Activated B cell treated with CpG ODN at 0.5 μM for 24 hours (primary cell): ENCODE measurements at regions of chr7 and their contacts with region 1.

Region 1: GRCh38 chr7:116165717-116166116 is 44.6 kb upstream of the TES start:
- DNase-seq: no peak
- ATAC-seq: peak; percentile 85
- H3K4me3 Mint-ChIP-seq: peak overlapping the region; percentile 61
- H3K27ac Mint-ChIP-seq: peak overlapping the region; percentile 92
- H3K4me1 Mint-ChIP-seq: peaks cover 82% of the 10 kb centered on the region
- H3K27me3 Mint-ChIP-seq: no peaks in the 10 kb centered on the region
- CTCF ChIP-seq: no peak

Region 2: DNA sequence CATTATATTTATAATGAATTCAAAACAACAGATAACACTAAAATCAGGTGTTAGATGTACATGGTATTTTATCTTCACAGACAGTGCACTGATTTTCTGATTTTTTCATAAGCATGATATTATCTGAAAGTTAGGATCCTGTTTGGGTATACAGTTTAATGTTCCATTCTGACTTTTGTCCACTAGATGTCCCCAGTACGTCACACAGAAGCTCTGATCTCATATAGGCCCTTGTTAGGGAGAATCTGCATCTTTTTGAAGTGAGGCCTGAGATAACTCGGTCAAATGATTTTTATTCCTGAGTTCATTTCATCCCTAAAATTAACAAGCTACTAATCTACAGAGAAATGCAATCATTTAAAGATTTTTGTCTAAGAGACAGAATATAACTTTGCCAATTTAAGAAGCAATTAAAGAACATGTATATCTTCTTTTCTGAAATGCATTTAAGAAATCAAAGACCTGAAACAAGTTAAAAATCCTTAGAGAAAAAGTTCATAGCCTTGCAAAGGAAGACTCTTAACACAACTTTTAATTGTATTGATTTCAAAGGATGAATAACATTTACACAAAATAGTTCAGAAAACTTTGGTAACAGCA is 27.4 kb before region 1 on chr7:
- CTCF ChIA-PET with region 1: interaction called, 23 read pairs
- POLR2A ChIA-PET with region 1: no interaction called
- intact Hi-C with region 1: loop called (anchors 2 kb)
- DNase-seq: no peak
- ATAC-seq: peak; percentile 91
- H3K4me3 Mint-ChIP-seq: no peak overlapping the region
- H3K27ac Mint-ChIP-seq: no peak overlapping the region
- H3K4me1 Mint-ChIP-seq: peaks cover 33% of the 10 kb centered on the region
- H3K27me3 Mint-ChIP-seq: no peaks in the 10 kb centered on the region
- CTCF ChIP-seq: peak; percentile 48

Region 3: DNA sequence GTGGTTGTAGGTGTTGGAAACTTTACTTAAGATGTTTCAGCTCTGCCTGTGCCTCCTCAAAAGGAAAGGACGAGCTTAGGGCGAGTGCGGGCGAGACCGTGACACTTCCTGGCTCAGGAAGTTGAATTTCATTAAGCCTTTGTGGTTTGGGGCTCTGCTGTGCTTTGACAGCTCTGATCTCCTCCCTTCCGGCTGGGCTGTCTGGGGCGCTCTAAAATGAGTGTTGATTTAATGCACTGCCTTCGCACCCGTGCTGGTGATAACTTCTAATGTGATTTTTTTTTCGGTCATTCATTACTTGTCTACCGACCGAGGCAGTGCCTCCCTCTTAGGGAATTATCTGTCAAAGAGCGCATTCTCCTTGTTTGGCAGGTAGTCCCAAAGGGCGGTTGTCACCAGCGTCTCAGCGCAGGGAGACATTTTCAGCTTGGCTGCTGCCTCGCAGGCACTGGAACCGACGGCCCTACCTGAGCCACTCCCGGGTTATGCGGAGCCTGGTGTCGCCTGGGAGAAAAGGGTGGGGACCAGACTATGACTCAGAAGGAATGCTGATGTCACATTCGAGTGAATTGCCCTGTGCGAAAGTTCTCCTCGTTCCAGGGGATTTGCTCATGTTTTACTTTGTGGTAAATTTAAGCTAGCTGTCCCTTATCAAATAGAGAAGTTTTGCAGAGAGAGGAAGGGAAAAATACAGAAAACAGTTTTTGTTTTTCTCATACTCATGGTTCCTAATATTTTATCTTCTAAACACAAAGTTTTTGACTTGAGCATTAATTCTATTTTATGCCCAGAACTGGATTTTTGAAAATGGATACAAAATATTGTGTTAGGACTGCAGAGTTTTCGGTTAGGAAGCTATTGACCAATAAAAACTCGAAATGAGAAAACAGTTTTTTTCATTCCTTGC is 45.5 kb after region 1 on chr7:
- CTCF ChIA-PET with region 1: interaction called, 5 read pairs
- POLR2A ChIA-PET with region 1: interaction called, 12 read pairs
- intact Hi-C with region 1: loop called (anchors 2 kb)
- DNase-seq: peak; percentile 52
- ATAC-seq: peak; percentile 71
- H3K4me3 Mint-ChIP-seq: peak overlapping the region; percentile 98
- H3K27ac Mint-ChIP-seq: peak overlapping the region; percentile 96
- H3K4me1 Mint-ChIP-seq: peaks cover 52% of the 10 kb centered on the region
- H3K27me3 Mint-ChIP-seq: no peaks in the 10 kb centered on the region
- CTCF ChIP-seq: no peak

Region 4: DNA sequence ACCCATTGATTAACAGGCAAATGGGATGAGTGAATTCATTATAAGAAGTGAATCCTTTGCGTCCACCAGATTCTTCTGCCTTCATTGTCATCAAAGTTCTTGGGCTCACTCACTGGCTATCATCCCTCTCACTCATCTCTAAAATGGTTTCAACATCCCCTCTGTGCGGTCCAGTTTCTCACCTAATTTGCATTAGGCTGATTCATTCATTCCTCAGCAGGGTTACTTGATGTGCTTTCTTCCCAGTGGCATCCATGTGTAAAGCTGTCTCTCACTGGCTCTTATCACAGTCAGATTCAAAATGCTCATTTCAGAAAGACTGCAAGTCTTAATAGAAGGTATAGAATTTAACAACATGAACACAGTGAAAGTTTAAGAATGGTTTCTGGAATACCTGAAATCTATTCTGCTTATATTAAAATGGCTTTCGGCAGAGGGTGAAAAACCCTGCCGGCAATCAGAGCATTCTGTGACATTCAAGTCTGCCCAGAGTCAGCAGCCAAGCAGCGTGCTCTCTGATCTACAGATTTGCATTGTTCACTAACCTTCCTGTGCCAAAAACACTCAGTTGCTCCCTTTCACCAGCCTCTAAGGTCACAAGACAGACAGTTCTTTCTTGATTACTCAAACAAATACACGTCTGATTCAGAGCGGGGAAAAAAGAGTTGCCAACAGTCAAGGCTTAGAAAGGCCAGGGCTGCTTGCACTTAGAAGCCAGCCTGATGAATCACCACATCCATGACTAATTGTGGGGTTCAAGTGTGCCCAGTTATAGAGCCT is 151.3 kb after region 1 on chr7:
- CTCF ChIA-PET with region 1: no interaction called
- POLR2A ChIA-PET with region 1: no interaction called
- intact Hi-C with region 1: loop called (anchors 5 kb)
- DNase-seq: no peak
- ATAC-seq: peak; percentile 74
- H3K4me3 Mint-ChIP-seq: peak overlapping the region; percentile 42
- H3K27ac Mint-ChIP-seq: peak overlapping the region; percentile 80
- H3K4me1 Mint-ChIP-seq: peaks cover 24% of the 10 kb centered on the region
- H3K27me3 Mint-ChIP-seq: peaks cover 5% of the 10 kb centered on the region
- CTCF ChIP-seq: no peak

Region 5: DNA sequence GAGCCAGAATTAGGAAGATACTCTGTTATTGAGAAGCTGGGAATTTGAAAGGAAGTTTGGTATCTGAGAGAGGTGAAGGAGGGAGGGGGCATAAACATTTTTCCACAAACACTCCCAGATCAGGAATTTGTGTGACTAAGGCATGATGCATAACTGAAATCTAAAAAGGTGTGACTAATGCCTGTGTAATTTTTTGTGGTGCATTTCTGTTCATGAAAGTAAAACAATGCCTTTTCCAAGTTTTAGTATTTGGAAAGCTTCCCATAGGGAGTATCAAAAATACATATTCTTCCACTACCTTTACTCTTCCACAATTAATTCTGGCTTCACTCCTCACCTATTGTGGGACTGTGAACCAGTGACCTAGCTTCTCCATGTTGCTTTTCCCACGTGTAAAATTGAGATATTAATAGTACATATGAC is 277.4 kb after region 1 on chr7:
- CTCF ChIA-PET with region 1: no interaction called
- POLR2A ChIA-PET with region 1: no interaction called
- intact Hi-C with region 1: no loop called
- DNase-seq: no peak
- ATAC-seq: no peak
- H3K4me3 Mint-ChIP-seq: no peak overlapping the region
- H3K27ac Mint-ChIP-seq: no peak overlapping the region
- H3K4me1 Mint-ChIP-seq: no peaks in the 10 kb centered on the region
- H3K27me3 Mint-ChIP-seq: peaks cover 6% of the 10 kb centered on the region
- CTCF ChIP-seq: no peak

Region 6: GRCh38 chr7:116786791-116787443 is 621.2 kb after region 1 on chr7:
- CTCF ChIA-PET with region 1: no interaction called
- POLR2A ChIA-PET with region 1: no interaction called
- intact Hi-C with region 1: loop called (anchors 2 kb)
- DNase-seq: no peak
- ATAC-seq: peak; percentile 97
- H3K4me3 Mint-ChIP-seq: no peak overlapping the region
- H3K27ac Mint-ChIP-seq: no peak overlapping the region
- H3K4me1 Mint-ChIP-seq: no peaks in the 10 kb centered on the region
- H3K27me3 Mint-ChIP-seq: peaks cover 2% of the 10 kb centered on the region
- CTCF ChIP-seq: no peak

Region 7: DNA sequence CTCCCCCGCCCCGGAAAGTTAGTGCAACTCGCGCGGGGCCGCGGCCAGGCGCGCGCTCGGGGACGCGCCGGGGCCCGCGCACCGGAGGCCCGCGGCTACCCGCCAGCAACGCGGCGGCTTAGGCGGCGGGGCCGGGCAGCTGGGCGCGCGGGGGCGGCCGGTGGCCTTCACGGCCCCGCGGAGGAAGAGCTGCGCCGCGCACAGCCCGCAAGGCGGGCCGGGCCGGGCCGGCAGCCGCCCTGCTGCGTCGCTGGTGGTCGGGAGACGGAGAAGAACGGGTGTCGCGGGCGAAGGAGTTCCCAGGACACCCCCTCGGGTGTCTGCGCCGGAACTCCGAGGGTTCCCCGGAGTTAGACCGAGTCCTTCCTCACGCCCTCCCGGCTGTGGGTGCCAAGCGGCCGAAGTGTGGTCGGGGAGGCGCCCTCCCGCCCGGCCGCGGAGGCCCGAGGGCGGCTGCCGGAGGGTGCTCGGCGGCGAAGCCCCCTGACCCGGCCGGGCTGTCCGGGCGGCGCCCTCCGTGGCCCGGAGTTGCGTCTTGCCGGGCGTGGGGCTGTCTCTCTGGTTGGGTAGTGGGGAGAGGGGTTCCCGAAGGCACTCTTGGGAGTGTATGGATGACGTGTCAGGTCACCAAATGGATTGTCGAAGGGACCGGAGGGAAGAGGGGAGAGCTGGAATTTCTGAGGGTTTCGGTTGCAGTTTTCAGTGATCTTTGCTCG is 788.2 kb after region 1 on chr7:
- CTCF ChIA-PET with region 1: no interaction called
- POLR2A ChIA-PET with region 1: no interaction called
- intact Hi-C with region 1: loop called (anchors 5 kb)
- DNase-seq: peak; percentile 60
- ATAC-seq: peak; percentile 59
- H3K4me3 Mint-ChIP-seq: peak overlapping the region; percentile 93
- H3K27ac Mint-ChIP-seq: peak overlapping the region; percentile 86
- H3K4me1 Mint-ChIP-seq: peaks cover 27% of the 10 kb centered on the region
- H3K27me3 Mint-ChIP-seq: no peaks in the 10 kb centered on the region
- CTCF ChIP-seq: no peak